ENCODE measurements at regions of chr1 and their contacts with region 1.

Region 1: DNA sequence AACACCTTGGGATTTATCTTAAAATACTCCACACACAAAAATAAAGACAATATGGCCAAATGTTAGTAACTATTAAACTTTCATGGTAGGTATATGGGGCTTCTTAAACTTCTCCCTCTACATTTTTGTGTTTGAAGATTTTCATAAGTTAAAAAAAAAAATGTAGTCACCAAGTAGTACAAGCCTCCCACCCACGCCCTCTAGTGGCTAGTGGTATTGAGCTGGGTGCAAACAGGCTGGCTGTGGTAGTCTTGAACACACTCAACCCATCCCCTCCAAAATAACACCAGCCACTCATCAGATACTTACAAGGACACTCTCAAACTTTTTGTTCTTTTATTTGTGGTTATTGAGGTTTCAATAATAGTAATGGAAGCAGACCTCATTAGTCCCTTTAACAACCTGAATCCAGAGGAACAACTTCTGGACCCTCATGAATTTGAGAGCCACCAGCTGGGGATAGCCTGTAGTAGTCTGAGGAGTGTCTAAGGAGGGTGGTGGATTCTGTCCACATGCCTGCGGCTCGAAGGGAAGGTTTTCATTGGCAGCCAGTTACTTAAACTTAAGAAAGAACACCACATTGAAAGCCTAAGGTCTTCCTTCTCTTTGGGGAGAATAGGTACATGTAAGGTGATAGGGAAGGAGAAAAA is 15.6 kb downstream of the RD3 start:
- H3K4me3 Mint-ChIP-seq: no peak overlapping the region
- H3K27ac Mint-ChIP-seq: no peak overlapping the region
- H3K4me1 Mint-ChIP-seq: no peaks in the 10 kb centered on the region
- H3K27me3 Mint-ChIP-seq: peaks cover 31% of the 10 kb centered on the region

Region 2: DNA sequence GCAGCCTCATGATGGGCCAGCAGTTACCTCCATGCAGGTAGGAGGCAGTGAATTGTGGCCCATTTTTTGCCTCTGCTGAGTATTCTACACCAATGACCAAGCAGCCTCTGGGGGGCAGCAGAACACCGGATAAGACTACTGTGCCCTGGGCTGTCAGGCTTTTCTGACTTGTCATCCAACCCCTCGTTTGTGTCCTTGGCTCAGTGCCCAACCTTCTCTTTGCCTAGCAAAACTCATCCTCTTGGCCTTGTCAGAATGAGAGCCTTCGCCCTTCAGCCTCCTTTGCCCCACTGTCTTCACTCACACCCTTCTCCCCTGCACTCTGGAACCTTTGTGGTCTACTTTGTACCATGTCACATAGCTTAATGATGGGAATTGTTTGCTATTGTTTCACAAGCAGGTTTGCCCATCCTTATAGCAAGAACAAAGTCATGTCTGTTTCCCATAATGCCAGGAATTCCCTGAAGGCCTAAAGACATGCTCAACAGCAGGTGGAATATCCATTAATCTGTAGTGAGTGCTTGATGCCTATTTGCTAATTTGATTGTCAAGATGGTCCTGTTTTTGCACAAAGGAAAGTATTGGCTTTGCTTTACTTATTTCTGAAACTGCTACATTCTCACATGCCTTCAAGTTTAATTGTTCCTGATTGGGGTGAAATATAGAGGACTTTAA is 891.7 kb before region 1 on chr1:
- intact Hi-C with region 1: loop called (anchors 5 kb)
- H3K4me3 Mint-ChIP-seq: no peak overlapping the region
- H3K27ac Mint-ChIP-seq: no peak overlapping the region
- H3K4me1 Mint-ChIP-seq: no peaks in the 10 kb centered on the region
- H3K27me3 Mint-ChIP-seq: no peaks in the 10 kb centered on the region

Measured in dendritic cell treated with granulocyte-macrophage colony-stimulating factor and Interleukin-4, amounts not matched to agents 40 ng/mL and 50 ng/mL, for 4 days (primary cell).